ENCODE measurements at regions of chr22 and their contacts with region 1.

Region 1: DNA sequence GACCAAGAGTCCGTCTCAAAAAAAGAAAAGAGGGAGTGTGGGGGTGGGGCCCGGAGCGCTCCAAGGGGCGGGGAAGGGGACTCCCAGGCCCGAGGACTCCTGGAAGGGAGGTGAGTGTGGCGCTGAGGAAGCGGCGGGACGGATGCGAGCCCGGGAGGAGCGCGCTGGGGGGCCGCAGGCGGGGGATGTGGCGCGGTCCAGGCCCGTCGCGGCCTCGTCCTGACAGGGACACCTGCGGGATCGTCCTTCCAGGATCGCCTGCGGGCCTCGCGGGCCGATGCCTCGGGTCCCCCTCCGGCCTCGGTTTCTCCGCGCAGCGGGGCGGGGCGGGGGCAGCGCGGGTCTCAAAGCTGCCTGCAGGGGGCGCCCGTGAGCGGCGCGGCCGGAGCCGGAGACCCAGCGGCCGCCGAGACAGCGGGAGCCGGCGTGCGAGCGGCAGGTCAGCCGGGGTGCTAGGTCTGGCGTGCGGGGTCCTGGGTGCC is 3.8 kb upstream of the ADORA2A start:
- DNase-seq: peak in 4 of 7 donors; percentile 48 to 69 (median 60)
- H3K4me3 ChIP-seq: peak overlapping the region in 2 of 4 donors; percentile 54 to 77
- H3K27ac ChIP-seq: peak overlapping the region in 2 of 5 donors; percentile 47 to 73
- H3K4me1 ChIP-seq: peaks cover 4 to 8% of the 10 kb centered on the region in 2 donors
- H3K27me3 ChIP-seq: no peaks in the 10 kb centered on the region
- CTCF ChIP-seq: peak; percentile 39 to 95 (median 72)
- POLR2A ChIP-seq: no peak

Region 2: DNA sequence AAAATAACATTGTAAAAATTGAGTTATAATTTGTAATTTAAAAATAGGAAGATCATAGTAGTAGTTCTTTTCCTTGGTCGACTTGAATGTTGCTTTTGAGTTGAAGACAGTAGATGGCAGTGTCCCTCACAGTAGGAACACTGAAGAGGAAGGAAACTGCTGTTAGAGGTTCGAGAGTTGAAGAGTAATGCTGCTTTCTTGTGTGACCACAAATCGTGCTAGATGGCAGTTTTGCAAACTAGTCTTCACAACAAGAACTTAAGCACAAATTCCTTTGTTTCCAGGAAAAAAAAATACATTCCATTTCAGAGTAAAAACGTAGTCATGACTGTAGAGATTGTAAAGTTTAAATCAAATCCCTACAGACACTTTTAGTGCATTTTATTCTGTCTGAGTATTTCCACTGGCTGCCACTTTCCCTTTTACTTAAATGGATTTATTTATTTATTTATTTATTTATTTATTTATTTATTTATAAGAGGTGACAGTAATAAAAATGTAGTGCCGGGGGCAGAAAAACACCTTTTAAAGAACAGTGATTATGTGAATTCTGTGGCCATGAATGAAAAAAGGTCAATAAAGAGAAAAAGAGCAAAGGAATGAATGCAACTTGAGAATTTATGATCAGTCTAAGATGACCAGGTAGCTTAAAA is 98.3 kb before region 1 on chr22:
- intact Hi-C with region 1: loop called in 1 of 2 experiments (anchors 10 kb)
- DNase-seq: peak in 3 of 7 donors; percentile 23 to 36 (median 32)
- H3K4me3 ChIP-seq: no peak overlapping the region
- H3K27ac ChIP-seq: no peak overlapping the region
- H3K4me1 ChIP-seq: peaks cover 0 to 12% of the 10 kb centered on the region in 2 donors
- H3K27me3 ChIP-seq: no peaks in the 10 kb centered on the region
- CTCF ChIP-seq: peak; percentile 38 to 84 (median 76)
- POLR2A ChIP-seq: no peak

Region 3: DNA sequence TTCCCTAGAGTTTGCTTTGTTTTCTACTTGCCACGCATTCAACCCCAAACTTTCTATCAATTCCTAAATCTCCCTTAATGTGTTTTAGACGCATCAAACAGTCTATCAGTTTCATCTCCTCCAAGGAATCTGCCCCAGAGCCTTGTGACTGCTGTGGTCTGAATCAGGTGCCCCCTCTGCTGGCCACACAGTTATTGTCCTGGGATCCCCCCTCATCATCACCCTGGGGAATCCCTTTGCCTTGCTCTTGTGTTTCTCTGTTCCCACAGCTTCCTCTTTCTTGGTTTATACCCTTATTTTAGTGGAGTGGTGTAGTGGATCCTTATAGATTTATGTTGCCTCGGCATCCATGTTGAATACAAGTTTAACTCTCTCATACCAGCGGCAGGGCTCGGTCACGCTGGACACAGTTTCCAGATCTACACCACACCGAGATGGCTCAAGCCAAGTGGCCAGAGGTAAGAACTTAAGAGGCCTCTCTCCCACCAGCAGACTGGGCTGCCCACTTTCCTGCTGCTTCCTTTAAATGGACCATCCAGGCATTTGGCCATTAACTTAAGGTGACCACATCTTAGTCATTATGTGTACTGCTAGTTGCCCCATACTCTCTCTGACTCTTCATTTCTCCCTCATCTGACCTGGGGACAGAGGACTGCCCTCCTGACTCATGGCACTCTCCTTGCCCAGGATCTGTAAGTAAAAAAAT is 79.7 kb after region 1 on chr22:
- intact Hi-C with region 1: loop called (anchors 5 kb)
- DNase-seq: peak; percentile 63 to 87 (median 70)
- H3K4me3 ChIP-seq: no peak overlapping the region
- H3K27ac ChIP-seq: no peak overlapping the region
- H3K4me1 ChIP-seq: peaks cover 0 to 4% of the 10 kb centered on the region in 2 donors
- H3K27me3 ChIP-seq: no peaks in the 10 kb centered on the region
- CTCF ChIP-seq: peak; percentile 51 to 80 (median 74)
- POLR2A ChIP-seq: no peak

Region 4: GRCh38 chr22:24525416-24526037 is 102.0 kb after region 1 on chr22:
- intact Hi-C with region 1: loop called (anchors 5 kb)
- DNase-seq: peak; percentile 74 to 95 (median 86)
- H3K4me3 ChIP-seq: no peak overlapping the region
- H3K27ac ChIP-seq: peak overlapping the region in 2 of 5 donors; percentile 20 to 50
- H3K4me1 ChIP-seq: peaks cover 0 to 6% of the 10 kb centered on the region in 2 donors
- H3K27me3 ChIP-seq: no peaks in the 10 kb centered on the region
- CTCF ChIP-seq: peak; percentile 74 to 89 (median 82)
- POLR2A ChIP-seq: no peak